A673 (cell line): ENCODE measurements at regions of chr6 and their contacts with region 1.

Region 1: DNA sequence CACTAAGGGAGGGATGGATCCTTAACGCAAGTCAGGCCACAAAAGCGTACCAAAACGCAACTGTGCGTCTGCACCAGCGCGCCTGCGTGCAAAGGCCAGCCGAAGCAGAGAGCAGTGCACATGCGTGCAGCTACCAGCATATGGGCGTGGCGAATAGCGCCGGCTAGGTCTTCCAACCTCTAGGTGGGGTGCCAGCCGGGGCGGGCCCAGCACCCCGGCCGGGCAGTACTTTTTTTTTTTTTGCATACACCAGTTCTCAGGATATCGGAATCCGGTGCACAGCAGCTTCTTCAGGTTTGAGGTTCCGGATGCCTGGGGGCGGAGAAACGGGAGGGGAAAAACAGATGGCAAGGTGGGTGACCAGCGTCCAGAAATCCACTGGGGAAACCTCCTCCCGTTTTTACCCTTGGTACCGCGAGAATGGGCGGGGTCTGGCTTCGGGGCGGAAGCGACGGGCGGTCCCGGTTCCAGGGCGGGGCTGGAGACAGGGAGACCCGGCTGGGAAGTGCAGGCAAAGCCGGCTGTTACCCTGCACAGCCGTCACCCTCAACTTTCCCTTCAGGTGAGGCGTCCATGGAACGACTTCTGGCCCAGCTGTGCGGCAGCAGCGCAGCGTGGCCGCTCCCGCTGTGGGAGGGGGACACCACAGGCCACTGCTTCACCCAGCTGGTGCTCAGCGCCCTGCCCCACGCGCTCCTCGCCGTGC is at the start of gene ABCC10:
- DNase-seq: peak; percentile 96
- H3K4me3 ChIP-seq: peak within 1 kb of the TSS; percentile 79
- H3K27ac ChIP-seq: peak within 1 kb of the TSS; percentile 86
- H3K4me1 ChIP-seq: peaks cover 8% of the 10 kb centered on the region
- H3K27me3 ChIP-seq: no peaks in the 10 kb centered on the region
- CTCF ChIP-seq: peak; percentile 57
- total RNA-seq, gene ABCC10: 37.5 and 46.4 TPM in 2 replicates

Region 2: GRCh38 chr6:42653851-42654250 is 773.7 kb before region 1 on chr6:
- CTCF ChIA-PET with region 1: no interaction called
- POLR2A ChIA-PET with region 1: interaction called, 10 read pairs
- intact Hi-C with region 1: no loop called
- DNase-seq: no peak
- H3K4me3 ChIP-seq: no peak overlapping the region
- H3K27ac ChIP-seq: no peak overlapping the region
- H3K4me1 ChIP-seq: no peaks in the 10 kb centered on the region
- H3K27me3 ChIP-seq: no peaks in the 10 kb centered on the region
- CTCF ChIP-seq: no peak

Region 3: DNA sequence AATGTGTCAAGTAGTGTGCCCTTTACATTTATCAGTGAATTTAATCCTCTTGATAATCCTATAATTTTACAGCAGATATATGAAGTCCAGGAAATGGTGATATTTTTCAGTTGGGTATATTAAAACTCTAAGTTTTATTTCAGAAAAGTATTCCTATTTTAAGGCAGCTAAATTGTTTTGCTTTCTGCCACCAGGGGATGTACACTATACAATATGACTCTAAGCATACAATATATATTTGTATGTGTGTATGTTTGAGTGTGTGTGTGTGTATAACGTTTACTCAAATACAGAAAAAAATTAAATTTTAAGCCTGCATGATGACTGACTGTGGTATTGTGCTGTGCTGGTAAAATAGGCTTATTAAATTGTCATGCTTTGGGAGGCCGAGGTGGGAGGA is 1798.5 kb after region 1 on chr6:
- CTCF ChIA-PET with region 1: no interaction called
- POLR2A ChIA-PET with region 1: no interaction called
- intact Hi-C with region 1: no loop called
- DNase-seq: no peak
- H3K4me3 ChIP-seq: no peak overlapping the region
- H3K27ac ChIP-seq: no peak overlapping the region
- H3K4me1 ChIP-seq: no peaks in the 10 kb centered on the region
- H3K27me3 ChIP-seq: no peaks in the 10 kb centered on the region
- CTCF ChIP-seq: peak; percentile 38; the same call in 1 of the 2 replicates